ENCODE measurements at regions of chrX and their contacts with region 1.

Region 1: DNA sequence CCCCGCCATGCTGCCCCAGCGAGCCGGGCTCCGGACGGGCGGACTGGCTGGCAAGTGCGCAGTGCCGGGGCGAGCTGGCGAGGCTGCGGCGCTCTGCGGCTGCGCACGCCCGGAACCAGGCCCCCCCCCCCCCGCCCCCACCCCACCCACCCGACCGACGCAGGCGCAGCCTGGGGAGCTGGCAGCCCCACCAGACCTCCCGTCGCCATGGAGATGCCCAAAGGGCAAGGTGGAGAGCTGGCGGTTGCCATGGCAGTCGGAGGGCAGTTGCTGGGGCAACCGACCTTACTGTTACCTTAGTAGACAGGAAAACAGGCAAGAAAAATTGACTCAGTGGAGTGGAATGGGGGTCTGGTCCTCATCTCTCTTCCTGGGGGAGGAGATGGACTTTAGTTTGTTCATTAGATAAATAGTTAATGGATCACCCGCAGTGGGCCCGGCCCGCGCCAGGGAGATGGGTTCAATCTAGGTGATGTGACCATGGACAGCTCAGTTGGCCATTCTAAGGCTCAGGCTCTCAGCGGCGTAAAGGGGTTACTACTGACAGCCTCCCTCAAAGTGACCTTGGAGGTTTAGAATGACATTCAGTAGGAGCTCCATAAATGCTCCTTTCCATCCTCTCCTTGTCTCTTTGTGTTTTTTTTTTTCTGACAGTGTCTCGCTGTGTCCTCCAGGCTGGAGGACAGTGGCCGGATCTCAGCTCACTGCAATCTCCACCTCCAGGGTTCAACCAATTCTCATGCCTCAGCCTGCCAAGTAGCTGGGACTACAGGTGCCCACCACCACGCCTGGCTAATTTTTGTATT is at the start of gene PCSK1N:
- DNase-seq: no peak
- ATAC-seq: no peak
- H3K4me3 ChIP-seq: peak within 1 kb of the TSS in 6 of 10 donors; percentile 7 to 26 (median 19)
- H3K27ac ChIP-seq: no peak within 1 kb of the TSS
- H3K4me1 ChIP-seq: no peaks in the 10 kb centered on the region
- H3K27me3 ChIP-seq: peaks cover 0 to 78% (median 40%) of the 10 kb centered on the region in 7 donors
- CTCF ChIP-seq: no peak
- total RNA-seq, gene PCSK1N: 0.36 to 0.78 (median 0.39) TPM in 5 of 10 donors, not detected in the others

Region 2: GRCh38 chrX:48531357-48531959 is 304.3 kb before region 1 on chrX:
- intact Hi-C with region 1: no loop called
- DNase-seq: no peak
- ATAC-seq: peak in 4 of 8 donors; percentile 26 to 81 (median 74)
- H3K4me3 ChIP-seq: no peak overlapping the region
- H3K27ac ChIP-seq: peak overlapping the region in 9 of 10 donors; percentile 11 to 64 (median 54)
- H3K4me1 ChIP-seq: peaks cover 0 to 3% (median 0%) of the 10 kb centered on the region in 9 donors
- H3K27me3 ChIP-seq: no peaks in the 10 kb centered on the region
- CTCF ChIP-seq: no peak

Region 3: DNA sequence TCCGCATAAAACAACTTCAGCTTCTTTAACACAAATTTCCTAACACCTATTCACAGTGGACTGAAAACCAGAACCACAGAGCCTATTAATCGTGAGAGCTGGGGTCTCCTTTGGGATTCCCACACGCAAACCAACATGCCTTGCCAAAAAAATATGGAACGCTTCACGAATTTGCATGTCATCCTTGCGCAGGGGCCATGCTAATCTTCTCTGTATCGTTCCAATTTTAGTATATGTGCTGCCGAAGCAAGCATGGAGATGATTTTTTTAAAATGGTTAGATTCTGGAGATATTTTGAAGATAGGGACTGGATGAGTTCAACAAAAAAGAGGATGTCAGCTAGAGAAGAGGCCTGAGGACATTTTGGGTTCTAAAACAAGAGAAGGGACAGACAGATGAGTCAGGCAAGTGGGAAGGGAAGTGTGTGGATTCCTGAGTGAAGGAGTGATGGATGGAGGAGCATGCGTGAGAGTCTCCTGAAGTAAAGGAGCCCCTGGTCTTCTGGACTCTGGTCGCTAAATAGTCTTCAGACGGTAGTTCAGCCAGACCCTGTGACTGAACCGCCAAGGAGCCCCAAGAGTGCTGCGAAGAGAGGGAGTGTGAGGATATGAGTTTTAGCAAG is 58.8 kb before region 1 on chrX:
- intact Hi-C with region 1: loop called in 1 of 10 experiments (anchors 10 kb)
- DNase-seq: no peak
- ATAC-seq: no peak
- H3K4me3 ChIP-seq: no peak overlapping the region
- H3K27ac ChIP-seq: no peak overlapping the region
- H3K4me1 ChIP-seq: no peaks in the 10 kb centered on the region
- H3K27me3 ChIP-seq: peaks cover 0 to 31% (median 0%) of the 10 kb centered on the region in 7 donors
- CTCF ChIP-seq: no peak